ENCODE measurements at regions of chr5 and their contacts with region 1.

Region 1: GRCh38 chr5:36944607-36945225 is 68.1 kb downstream of the NIPBL start:
- DNase-seq: no peak
- H3K4me3 ChIP-seq: no peak overlapping the region
- H3K27ac ChIP-seq: no peak overlapping the region
- H3K4me1 ChIP-seq: peaks cover 41 to 47% (median 47%) of the 10 kb centered on the region in 4 donors
- H3K27me3 ChIP-seq: no peaks in the 10 kb centered on the region
- CTCF ChIP-seq: peak; percentile 28 to 62 (median 50)
- EP300 ChIP-seq: no peak
- POLR2A ChIP-seq: no peak

Region 2: DNA sequence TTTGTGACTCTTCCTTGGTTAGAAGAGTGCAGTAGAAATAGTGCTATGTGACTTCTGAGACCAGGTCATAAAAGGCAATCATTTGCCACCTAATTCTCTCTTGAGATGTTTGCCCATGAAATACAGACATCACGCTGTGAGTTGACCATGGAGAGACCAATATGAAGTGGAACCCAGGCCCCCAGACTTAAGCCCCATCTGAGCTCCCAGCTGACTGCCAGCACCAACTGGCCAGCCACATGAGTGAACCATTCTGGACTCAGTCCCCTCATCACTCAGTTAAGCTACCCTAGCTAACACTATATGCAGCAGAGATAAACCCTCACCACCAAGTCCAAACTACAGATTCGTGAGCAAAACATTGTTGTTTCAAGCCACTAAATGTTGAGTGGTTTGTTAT is 128.8 kb before region 1 on chr5:
- intact Hi-C with region 1: no loop called
- DNase-seq: no peak
- H3K4me3 ChIP-seq: no peak overlapping the region
- H3K27ac ChIP-seq: no peak overlapping the region
- H3K4me1 ChIP-seq: no peaks in the 10 kb centered on the region
- H3K27me3 ChIP-seq: no peaks in the 10 kb centered on the region
- CTCF ChIP-seq: no peak
- EP300 ChIP-seq: no peak
- POLR2A ChIP-seq: no peak

Region 3: GRCh38 chr5:36875790-36876388 is 68.8 kb before region 1 on chr5:
- intact Hi-C with region 1: loop called (anchors 5 kb)
- DNase-seq: peak; percentile 92
- H3K4me3 ChIP-seq: peak overlapping the region; percentile 71 to 88 (median 84)
- H3K27ac ChIP-seq: peak overlapping the region; percentile 96 to 99 (median 98)
- H3K4me1 ChIP-seq: peaks cover 22 to 58% (median 47%) of the 10 kb centered on the region in 4 donors
- H3K27me3 ChIP-seq: no peaks in the 10 kb centered on the region
- CTCF ChIP-seq: peak; percentile 34 to 64 (median 35)
- EP300 ChIP-seq: no peak
- POLR2A ChIP-seq: no peak